ENCODE measurements at regions of chr3 and their contacts with region 1.

Region 1: DNA sequence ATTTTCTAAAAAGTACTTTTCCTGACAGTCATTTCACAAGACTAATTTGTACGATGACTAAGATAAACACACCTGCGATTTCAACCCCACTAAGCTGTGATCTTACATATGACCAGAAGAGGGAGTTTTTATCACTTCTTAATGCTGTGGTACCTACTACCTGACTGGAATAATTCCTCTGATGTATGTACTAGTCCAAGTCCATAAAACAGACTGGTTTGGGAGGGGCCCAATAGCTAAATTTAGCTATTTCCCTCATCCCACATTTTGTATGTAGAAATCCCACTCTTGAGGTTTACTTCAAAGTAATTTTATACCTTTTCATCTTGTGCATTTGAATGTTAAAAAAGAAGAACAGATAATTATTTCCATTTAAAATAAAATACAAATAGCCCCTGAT is 49.7 kb upstream of the SCAANT1 start:
- DNase-seq: no peak
- ATAC-seq: peak; percentile 74
- H3K4me3 Mint-ChIP-seq: no peak overlapping the region
- H3K27ac Mint-ChIP-seq: no peak overlapping the region
- H3K4me1 Mint-ChIP-seq: peaks cover 50% of the 10 kb centered on the region
- H3K27me3 Mint-ChIP-seq: no peaks in the 10 kb centered on the region

Region 2: DNA sequence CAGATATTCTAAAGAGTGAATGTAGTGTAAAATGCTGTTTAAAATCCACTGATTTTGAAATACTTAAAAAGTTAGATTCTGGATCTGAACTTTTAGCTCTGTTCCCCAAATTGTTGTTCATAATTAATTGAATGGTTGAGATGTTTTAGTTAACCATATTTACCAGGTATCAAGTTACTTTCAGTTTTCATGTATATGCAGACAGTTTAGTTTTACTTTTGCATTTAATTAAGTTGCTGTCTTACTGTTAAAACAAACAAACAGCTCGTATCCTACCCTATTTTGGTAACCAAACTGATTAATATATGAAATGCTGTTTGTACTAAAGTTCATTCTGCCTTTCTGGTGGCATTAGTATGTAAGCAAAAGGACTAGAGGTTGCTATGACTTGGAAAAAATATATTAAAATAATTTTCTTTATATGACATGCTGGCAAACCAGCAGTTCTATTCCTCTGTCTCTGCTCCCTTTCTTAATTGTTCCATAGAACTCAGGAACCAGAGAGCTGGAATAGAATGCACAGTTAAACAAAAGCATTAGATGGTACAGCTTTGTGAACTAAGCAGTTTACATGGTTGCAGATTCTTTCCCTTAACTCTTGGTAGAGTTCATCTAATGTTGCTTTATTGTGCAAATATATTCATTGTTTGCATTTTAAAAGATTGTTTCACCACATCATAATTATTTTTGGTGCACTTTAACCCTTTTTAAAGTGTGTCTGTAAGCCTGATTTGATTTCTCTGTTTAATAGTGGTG is 10.2 kb before region 1 on chr3:
- CTCF ChIA-PET with region 1: interaction called, 18 read pairs
- POLR2A ChIA-PET with region 1: no interaction called
- intact Hi-C with region 1: no loop called
- DNase-seq: no peak
- ATAC-seq: peak; percentile 30
- H3K4me3 Mint-ChIP-seq: no peak overlapping the region
- H3K27ac Mint-ChIP-seq: peak overlapping the region; percentile 47
- H3K4me1 Mint-ChIP-seq: peaks cover 45% of the 10 kb centered on the region
- H3K27me3 Mint-ChIP-seq: no peaks in the 10 kb centered on the region

Region 3: GRCh38 chr3:63975723-63976122 is 13.8 kb after region 1 on chr3:
- CTCF ChIA-PET with region 1: interaction called, 117 read pairs
- POLR2A ChIA-PET with region 1: interaction called, 4 read pairs
- intact Hi-C with region 1: loop called in 1 of 2 experiments (anchors 2 kb)
- DNase-seq: no peak
- ATAC-seq: no peak
- H3K4me3 Mint-ChIP-seq: no peak overlapping the region
- H3K27ac Mint-ChIP-seq: peak overlapping the region; percentile 97
- H3K4me1 Mint-ChIP-seq: peaks cover 95% of the 10 kb centered on the region
- H3K27me3 Mint-ChIP-seq: no peaks in the 10 kb centered on the region

Measured in activated CD4-positive, alpha-beta T cell treated with anti-CD3 and anti-CD28 coated beads for 36 hours (primary cell).